HCT116 (cell line): ENCODE measurements at regions of chr20 and their contacts with region 1.

Region 1: DNA sequence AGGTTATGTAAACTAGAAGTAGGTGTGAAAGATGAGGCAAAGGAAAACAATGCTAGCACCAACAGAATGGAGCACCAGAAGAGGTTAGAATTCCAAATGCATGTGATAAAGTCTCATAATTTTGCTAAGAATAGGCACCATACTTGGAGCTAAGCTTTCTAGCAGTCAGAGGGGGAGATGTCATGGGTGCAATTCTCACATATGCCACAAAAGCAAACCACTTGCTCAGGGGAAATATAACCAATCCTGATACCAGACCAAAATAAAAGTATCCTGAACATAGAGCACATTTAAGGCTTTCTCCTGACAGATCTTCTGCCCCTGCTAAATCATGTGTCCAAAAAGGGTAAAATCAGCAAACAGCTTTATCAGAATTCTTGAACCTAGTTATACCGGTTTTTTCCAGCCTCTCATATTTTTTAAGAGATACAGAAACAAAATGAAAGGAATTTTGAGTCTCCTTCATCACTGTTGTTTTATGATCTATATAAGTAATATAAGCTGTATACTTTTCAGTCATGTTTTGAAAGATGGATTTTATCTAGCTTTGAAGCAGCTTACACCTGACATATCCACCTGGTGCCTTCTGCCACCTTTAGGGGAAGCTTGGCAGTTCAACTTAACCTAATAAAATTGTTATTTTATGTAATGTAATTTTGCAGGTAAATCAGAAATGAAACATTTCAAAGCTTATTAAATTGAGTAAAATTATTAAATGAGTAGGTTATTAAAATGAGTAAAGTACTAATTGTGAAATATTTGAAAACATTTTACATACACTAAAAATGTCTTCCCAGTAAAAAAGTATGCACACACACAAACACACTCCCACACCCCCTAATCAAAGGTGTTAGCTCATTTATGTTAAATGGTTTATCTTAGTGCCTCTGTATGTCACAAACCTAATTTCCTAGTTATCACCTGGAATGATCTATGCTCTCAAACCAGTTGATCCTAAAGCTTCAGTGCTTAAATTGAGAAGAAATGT is 2.8 kb downstream of the SPO11 start:
- DNase-seq: no peak
- ATAC-seq: peak; percentile 79
- H3K4me3 ChIP-seq: no peak overlapping the region
- H3K27ac ChIP-seq: no peak overlapping the region
- H3K4me1 ChIP-seq: peaks cover under 1 to 1% of the 10 kb centered on the region in 2 experiments; a peak in 2 of 4 replicates
- H3K27me3 ChIP-seq: peaks cover 19% of the 10 kb centered on the region
- CTCF ChIP-seq: peak; percentile 54 to 79 (median 57); a peak in 5 of 6 replicates
- POLR2A ChIP-seq: no peak
- RAD21 ChIP-seq: peak; percentile 72

Region 2: GRCh38 chr20:57097245-57097915 is 235.0 kb before region 1 on chr20:
- CTCF ChIA-PET with region 1: interaction called, 100 read pairs
- POLR2A ChIA-PET with region 1: no interaction called
- RAD21 ChIA-PET with region 1: interaction called in 1 of 2 experiments, 6 read pairs
- intact Hi-C with region 1: loop called (anchors 1 kb)
- DNase-seq: no peak
- ATAC-seq: no peak
- H3K4me3 ChIP-seq: no peak overlapping the region
- H3K27ac ChIP-seq: no peak overlapping the region
- H3K4me1 ChIP-seq: peaks cover 0 to 3% of the 10 kb centered on the region in 2 experiments; a peak in 1 of 4 replicates
- H3K27me3 ChIP-seq: no peaks in the 10 kb centered on the region
- CTCF ChIP-seq: no peak
- POLR2A ChIP-seq: no peak
- RAD21 ChIP-seq: no peak

Region 3: DNA sequence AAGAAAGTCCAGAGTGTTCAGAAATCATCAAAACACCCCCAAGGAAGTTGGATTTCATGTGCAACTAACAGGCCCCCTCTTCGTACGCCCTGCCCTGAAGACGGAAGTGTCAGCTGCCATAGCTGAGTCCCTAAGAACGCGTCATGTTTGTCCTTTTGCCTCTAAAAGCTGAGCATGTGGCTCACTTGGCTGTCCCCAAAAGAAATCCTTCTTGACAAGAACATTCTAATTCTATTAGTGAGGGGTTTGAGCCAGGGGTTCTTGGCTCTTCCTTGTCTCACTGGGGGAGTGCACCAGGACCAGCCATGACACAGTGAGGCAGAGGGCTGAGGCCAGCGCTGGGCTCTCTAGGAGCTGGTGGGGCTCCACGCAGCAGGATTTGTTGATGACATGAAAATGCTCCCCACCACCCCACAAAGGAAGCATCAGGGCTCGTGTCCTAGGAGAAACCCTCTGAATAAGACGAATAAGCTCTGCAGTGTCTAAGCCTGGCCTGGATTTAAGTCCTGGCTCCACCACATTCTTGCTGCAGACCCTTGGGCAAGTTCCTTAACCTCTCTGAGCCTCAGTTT is 22.8 kb before region 1 on chr20:
- CTCF ChIA-PET with region 1: interaction called, 10 read pairs
- POLR2A ChIA-PET with region 1: no interaction called
- RAD21 ChIA-PET with region 1: no interaction called
- intact Hi-C with region 1: no loop called
- DNase-seq: no peak
- ATAC-seq: no peak
- H3K4me3 ChIP-seq: no peak overlapping the region
- H3K27ac ChIP-seq: no peak overlapping the region
- H3K4me1 ChIP-seq: no peaks in the 10 kb centered on the region
- H3K27me3 ChIP-seq: peaks cover 28% of the 10 kb centered on the region; the same call in 1 of the 2 replicates
- CTCF ChIP-seq: no peak
- POLR2A ChIP-seq: no peak
- RAD21 ChIP-seq: no peak

Region 4: DNA sequence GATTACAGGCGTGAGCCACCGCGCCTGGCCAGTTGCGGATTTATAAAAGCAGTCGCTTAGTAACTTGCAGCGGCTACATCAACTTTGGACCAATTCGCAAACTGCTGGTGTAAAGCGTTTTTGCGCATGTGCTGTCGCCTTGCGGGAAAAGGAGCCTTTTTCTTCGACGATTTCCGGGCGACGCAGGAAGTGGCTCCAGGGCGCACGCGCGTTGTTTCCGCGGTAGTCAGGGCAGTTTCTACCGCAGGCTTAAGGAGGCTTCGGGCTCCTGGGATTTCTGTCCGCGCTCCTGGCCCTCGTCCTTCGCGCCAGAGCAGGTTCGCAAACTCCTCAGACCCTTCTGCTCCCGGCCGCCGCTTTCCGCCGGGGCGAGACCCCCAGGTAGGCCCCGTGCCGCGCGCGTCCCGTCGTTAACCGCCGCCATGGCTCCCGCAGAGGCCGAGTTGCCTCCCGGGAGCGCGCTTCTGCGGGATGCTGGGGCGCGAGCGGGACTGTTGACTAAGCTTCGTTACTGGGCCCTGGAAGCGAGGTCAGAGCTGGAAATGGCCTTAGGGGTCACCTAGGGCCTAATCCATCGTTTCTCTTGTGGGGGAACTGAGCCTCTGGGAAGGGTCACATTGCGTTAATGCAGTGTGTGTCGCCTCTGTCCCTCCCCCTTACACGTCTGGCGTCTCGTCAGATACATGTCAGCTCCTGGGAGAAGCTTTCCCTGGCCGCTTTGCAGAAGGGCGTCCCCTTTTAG is 18.8 kb after region 1 on chr20 and contains the start of gene RAE1:
- CTCF ChIA-PET with region 1: interaction called, 21 read pairs
- POLR2A ChIA-PET with region 1: no interaction called
- RAD21 ChIA-PET with region 1: interaction called in 1 of 2 experiments, 4 read pairs
- intact Hi-C with region 1: no loop called
- DNase-seq: peak; percentile 89
- ATAC-seq: peak; percentile 86
- H3K4me3 ChIP-seq: peak within 1 kb of the TSS; percentile 65 to 96
- H3K27ac ChIP-seq: peak within 1 kb of the TSS; percentile 84
- H3K4me1 ChIP-seq: peaks cover 9 to 17% of the 10 kb centered on the region in 2 experiments
- H3K27me3 ChIP-seq: no peaks in the 10 kb centered on the region
- CTCF ChIP-seq: no peak
- POLR2A ChIP-seq: peak; percentile 49
- RAD21 ChIP-seq: no peak
- total RNA-seq, gene RAE1: 46.3 TPM